ENCODE measurements at regions of chr1 and their contacts with region 1.

Region 1: GRCh38 chr1:71093938-71094337 is 13.1 kb upstream of the ZRANB2 start:
- DNase-seq: no peak
- ATAC-seq: no peak; the same call in 1 of the 2 replicates
- H3K4me3 ChIP-seq: no peak overlapping the region
- H3K27ac ChIP-seq: no peak overlapping the region
- H3K4me1 ChIP-seq: no peaks in the 10 kb centered on the region
- H3K27me3 ChIP-seq: no peaks in the 10 kb centered on the region
- CTCF ChIP-seq: peak in 2 of 3 experiments; percentile 20 to 41; a peak in 2 of 6 replicates
- POLR2A ChIP-seq: no peak
- RAD21 ChIP-seq: peak; percentile 54; the same call in 1 of the 2 replicates

Region 2: GRCh38 chr1:71031426-71031825 is 62.5 kb before region 1 on chr1:
- CTCF ChIA-PET with region 1: no interaction called
- POLR2A ChIA-PET with region 1: no interaction called
- RAD21 ChIA-PET with region 1: no interaction called
- intact Hi-C with region 1: no loop called
- DNase-seq: no peak
- ATAC-seq: no peak
- H3K4me3 ChIP-seq: no peak overlapping the region
- H3K27ac ChIP-seq: no peak overlapping the region
- H3K4me1 ChIP-seq: no peaks in the 10 kb centered on the region
- H3K27me3 ChIP-seq: peaks cover 64% of the 10 kb centered on the region
- CTCF ChIP-seq: no peak
- POLR2A ChIP-seq: no peak
- RAD21 ChIP-seq: no peak

Region 3: DNA sequence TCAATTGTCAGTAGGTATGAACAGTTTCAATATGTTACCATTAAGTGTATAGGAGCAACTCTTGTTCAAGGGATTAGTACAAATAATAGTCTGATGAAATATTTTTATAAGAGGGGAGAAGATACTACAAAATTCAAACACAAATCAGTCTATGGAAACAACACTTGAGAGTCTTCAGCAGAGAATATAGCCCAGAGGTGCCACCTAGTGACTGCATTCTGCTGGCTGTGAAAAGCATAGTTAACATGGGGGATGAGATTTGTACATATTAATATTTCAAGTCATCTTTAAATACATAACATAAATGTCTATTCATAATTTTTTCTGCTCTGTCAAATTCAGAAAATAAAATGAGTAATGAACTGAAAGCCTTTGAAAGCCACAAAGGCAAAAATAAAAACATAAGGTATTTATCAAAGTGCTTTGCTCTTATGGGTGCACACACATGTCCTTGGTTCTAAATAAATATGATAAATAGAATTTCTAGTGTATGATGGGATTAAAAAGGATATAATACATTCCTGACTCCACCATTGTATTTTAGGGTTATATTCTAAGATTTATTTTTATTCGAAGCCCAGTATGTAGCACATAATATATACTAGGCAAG is 427.8 kb after region 1 on chr1:
- CTCF ChIA-PET with region 1: no interaction called
- POLR2A ChIA-PET with region 1: no interaction called
- RAD21 ChIA-PET with region 1: no interaction called
- intact Hi-C with region 1: loop called (anchors 5 kb)
- DNase-seq: no peak
- ATAC-seq: no peak
- H3K4me3 ChIP-seq: no peak overlapping the region
- H3K27ac ChIP-seq: no peak overlapping the region
- H3K4me1 ChIP-seq: no peaks in the 10 kb centered on the region
- H3K27me3 ChIP-seq: no peaks in the 10 kb centered on the region
- CTCF ChIP-seq: peak in 2 of 3 experiments; percentile 12 to 35; a peak in 3 of 6 replicates
- POLR2A ChIP-seq: no peak
- RAD21 ChIP-seq: peak; percentile 26; the same call in 1 of the 2 replicates

Region 4: GRCh38 chr1:72037745-72038343 is 943.9 kb after region 1 on chr1:
- CTCF ChIA-PET with region 1: no interaction called
- POLR2A ChIA-PET with region 1: no interaction called
- RAD21 ChIA-PET with region 1: no interaction called
- intact Hi-C with region 1: loop called (anchors 10 kb)
- DNase-seq: peak; percentile 4
- ATAC-seq: no peak
- H3K4me3 ChIP-seq: no peak overlapping the region
- H3K27ac ChIP-seq: no peak overlapping the region
- H3K4me1 ChIP-seq: no peaks in the 10 kb centered on the region
- H3K27me3 ChIP-seq: no peaks in the 10 kb centered on the region
- CTCF ChIP-seq: peak in 2 of 3 experiments; percentile 33 to 50; a peak in 3 of 6 replicates
- POLR2A ChIP-seq: no peak
- RAD21 ChIP-seq: peak; percentile 23; the same call in 1 of the 2 replicates

Measured in HCT116 (cell line).